ENCODE measurements at regions of chr17 and their contacts with region 1.

Region 1: DNA sequence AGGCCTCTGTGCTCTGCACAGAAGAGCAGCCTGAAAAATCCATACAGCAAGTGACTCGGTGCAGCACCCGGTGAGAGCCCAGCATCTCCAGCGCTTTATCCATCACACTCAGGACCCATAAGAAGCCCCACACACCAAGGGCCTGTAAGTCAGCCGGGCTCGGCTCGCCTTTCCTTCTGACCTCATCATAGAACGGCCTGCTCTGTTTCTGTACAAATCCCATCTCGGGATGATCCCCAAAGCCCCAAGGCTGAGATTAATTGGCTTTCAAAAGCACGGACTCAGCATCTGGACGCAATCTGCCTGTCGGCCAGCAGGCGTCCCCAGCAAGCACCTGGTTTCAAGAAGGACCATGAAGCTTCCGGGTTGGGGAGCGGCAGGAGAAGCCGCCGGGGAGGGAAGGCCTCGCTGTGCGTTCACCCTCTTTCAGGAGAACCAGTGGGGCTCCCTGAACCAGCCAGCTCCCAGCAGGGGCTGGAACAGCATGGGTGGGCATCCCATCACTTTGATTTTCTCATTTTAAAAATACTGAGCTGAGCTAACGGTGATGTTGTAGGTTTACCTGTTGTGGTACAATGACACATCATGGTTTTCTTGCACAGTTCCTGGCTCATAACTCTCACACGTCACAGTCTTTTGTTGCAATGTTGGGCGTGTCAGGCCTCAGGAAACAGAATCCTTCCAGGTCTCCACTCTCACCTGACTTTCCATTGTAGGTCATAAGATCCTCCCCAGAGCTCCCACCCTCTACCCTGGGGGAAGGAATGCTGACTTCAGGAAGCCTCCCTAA is 6.7 kb downstream of the CCDC57 start:
- DNase-seq: peak; percentile 47
- H3K4me3 ChIP-seq: no peak overlapping the region
- H3K27me3 ChIP-seq: no peaks in the 10 kb centered on the region
- CTCF ChIP-seq: peak; percentile 96

Region 2: GRCh38 chr17:81071761-81072741 is 1133.9 kb before region 1 on chr17:
- CTCF ChIA-PET with region 1: no interaction called
- POLR2A ChIA-PET with region 1: no interaction called
- DNase-seq: no peak
- H3K4me3 ChIP-seq: no peak overlapping the region
- H3K27me3 ChIP-seq: no peaks in the 10 kb centered on the region
- CTCF ChIP-seq: no peak

Region 3: GRCh38 chr17:82098072-82098821 is 107.7 kb before region 1 on chr17 and contains the start of gene FASN:
- CTCF ChIA-PET with region 1: no interaction called
- POLR2A ChIA-PET with region 1: no interaction called
- DNase-seq: peak; percentile 60
- H3K4me3 ChIP-seq: peak within 1 kb of the TSS; percentile 76
- H3K27me3 ChIP-seq: no peaks in the 10 kb centered on the region
- CTCF ChIP-seq: peak; percentile 53
- polyA plus RNA-seq, gene FASN: 5.2 and 11.3 TPM in 2 replicates

Region 4: DNA sequence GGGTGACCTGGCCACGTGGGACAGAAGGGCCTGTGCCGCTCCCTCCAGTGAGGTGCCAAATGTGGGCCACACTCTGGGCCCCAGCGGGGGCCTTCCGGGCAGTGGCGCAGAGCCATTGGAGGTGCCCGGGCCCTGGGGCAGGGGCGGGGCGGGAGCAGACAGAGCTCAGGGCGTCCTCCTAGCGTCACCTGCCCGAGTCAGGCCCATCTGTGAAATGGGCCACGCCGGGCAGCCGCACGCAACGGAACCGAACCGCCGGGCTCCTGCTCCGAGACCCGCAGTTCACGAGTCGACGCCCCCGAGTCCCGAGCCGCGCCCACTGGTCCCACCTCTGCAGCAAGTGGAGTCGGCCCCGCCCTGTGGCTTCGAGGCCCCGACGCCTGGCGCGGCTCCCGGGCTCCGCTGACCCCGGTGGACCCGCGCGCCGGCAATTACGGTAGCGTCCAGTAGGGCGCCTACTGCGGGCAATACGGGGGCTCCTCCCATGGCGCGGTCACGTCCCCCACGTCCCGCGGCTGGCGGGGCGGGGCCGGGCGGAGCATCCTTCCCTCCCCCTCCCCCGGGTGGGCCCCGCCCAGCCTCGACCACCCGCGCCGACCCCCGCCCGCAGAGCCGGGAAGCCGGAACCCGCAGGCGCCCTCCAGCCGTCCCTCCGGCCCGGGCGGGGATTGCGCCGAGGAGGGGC is 24.9 kb after region 1 on chr17:
- CTCF ChIA-PET with region 1: interaction called, 22 read pairs
- POLR2A ChIA-PET with region 1: interaction called, 3 read pairs
- DNase-seq: no peak
- H3K4me3 ChIP-seq: peak overlapping the region; percentile 98
- H3K27me3 ChIP-seq: no peaks in the 10 kb centered on the region
- CTCF ChIP-seq: peak; percentile 49

Region 5: DNA sequence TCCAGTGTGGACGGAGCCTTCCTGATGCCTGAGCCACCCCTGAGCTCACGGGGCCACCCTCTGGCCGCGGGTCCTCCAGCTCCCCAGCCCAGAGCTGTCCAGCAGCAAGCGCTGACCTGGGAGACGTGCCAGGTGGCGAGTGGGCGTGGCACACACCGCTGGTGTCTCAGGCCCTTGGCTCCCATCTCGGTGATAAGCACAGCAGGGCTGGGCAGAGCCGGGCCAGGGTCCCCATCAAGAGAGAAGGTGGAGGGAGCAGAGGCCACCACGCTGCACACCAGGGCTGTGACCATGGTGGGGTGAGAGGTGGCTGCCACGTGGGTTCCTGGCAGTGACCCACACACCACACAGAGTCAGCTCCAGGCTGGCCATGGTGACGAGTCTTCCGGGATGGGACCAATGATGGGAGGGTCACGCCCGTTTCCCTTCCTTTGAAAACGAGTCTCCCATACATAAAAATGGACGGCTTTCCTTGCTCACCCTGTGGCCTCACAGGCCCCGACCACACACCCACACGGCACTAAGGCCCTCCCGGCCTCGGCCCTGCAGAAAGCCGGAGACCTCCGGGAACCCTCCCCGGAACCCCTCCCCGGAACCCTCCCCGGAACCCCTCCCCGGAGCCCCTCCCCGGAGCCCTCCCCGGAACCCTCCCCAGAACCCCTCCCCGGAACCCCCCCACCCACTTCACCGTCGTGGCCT is 182.5 kb after region 1 on chr17:
- CTCF ChIA-PET with region 1: no interaction called
- POLR2A ChIA-PET with region 1: no interaction called
- DNase-seq: no peak
- H3K4me3 ChIP-seq: no peak overlapping the region
- H3K27me3 ChIP-seq: peaks cover 8% of the 10 kb centered on the region
- CTCF ChIP-seq: no peak

Measured in BJ (cell line).